Endothelial cell of umbilical vein (primary cell): ENCODE measurements at regions of chr9 and their contacts with region 1.

Region 1: GRCh38 chr9:92140074-92140753 is 25.0 kb upstream of the SPTLC1 start:
- DNase-seq: peak; percentile 72
- H3K4me3 ChIP-seq: no peak overlapping the region
- H3K27ac ChIP-seq: no peak overlapping the region
- H3K4me1 ChIP-seq: peaks cover 5% of the 10 kb centered on the region
- H3K27me3 ChIP-seq: no peaks in the 10 kb centered on the region
- CTCF ChIP-seq: peak; percentile 90 to 99
- POLR2A ChIP-seq: no peak

Region 2: DNA sequence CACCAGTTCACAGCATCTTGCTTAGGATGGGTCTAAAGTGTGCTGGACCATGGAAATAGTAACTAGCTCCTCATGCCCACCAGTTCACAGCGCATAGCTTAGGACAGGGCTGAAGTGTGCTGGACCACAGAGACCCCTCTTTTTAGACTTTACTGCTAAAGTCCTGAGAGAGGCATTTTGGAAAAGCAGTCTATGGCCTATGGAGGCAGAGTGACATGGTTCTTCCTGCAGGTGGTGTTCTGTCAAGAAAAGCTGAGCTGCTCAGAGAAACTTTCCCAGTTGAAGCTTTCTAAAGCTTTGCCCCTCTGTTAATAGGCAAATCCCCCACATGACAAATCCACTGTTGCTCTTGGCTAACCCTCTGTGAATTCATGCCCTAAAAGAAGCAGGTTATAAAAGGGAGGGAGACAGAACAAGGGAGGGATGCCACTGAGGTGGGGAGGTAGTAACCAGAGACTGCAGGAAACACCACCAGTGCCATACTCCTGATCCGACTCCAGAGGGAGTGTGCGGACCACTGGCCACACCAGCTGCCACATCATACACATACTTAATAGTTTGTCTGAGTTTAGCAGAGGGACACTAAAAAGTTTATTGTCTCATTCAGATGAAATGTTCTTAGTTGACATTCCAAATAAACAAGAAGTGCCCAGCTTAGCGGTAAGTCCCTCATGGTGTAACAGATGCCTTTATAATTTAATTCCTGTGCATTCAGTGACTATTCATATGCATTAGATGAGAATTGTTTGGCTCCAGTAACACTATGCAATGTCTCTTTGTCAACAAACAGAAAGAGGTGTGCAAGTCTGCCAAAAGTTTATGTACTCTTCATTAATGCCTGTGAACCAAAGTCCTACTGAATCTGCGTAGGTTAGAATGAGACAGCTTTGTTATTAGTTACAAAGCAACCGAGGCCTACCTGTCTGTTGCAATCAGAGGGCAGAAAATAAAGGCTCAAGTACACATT is 480.4 kb before region 1 on chr9:
- CTCF ChIA-PET with region 1: no interaction called
- POLR2A ChIA-PET with region 1: no interaction called
- dilution Hi-C with region 1: no loop called
- intact Hi-C with region 1: no loop called
- DNase-seq: no peak
- H3K4me3 ChIP-seq: no peak overlapping the region
- H3K27ac ChIP-seq: no peak overlapping the region
- H3K4me1 ChIP-seq: no peaks in the 10 kb centered on the region
- H3K27me3 ChIP-seq: no peaks in the 10 kb centered on the region
- CTCF ChIP-seq: peak; percentile 35 to 37
- POLR2A ChIP-seq: no peak

Region 3: GRCh38 chr9:91775011-91775707 is 365.1 kb before region 1 on chr9:
- CTCF ChIA-PET with region 1: no interaction called
- POLR2A ChIA-PET with region 1: no interaction called
- dilution Hi-C with region 1: no loop called
- intact Hi-C with region 1: no loop called
- DNase-seq: peak; percentile 36
- H3K4me3 ChIP-seq: no peak overlapping the region
- H3K27ac ChIP-seq: no peak overlapping the region
- H3K4me1 ChIP-seq: no peaks in the 10 kb centered on the region
- H3K27me3 ChIP-seq: no peaks in the 10 kb centered on the region
- CTCF ChIP-seq: peak; percentile 68 to 92
- POLR2A ChIP-seq: no peak

Region 4: DNA sequence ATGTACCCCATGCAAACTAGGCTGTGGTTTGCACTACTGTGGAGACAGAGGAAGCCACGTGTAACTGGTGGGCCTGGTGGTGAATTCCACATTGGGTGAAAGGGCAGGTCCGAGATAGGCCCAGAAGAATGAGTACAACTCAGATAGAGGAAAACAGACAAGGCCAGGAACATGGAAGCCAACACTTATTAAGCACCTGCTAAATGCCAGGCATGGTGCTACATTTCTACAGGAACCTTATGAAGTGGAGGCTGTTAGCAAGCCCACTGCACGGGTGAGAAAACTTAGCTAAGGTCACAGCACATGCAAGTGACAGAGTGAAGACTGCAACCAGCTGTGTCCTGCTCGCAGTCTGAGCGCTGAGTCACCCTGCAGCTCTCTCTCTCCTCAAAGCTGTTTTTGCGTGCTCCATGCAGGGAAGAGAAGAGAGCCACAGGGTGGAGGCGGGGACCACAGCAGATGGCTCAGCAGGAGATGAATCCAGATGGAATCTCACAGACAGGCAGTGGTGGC is 40.5 kb after region 1 on chr9:
- CTCF ChIA-PET with region 1: interaction called, 12 read pairs
- POLR2A ChIA-PET with region 1: no interaction called
- dilution Hi-C with region 1: no loop called
- intact Hi-C with region 1: no loop called
- DNase-seq: no peak
- H3K4me3 ChIP-seq: no peak overlapping the region
- H3K27ac ChIP-seq: no peak overlapping the region
- H3K4me1 ChIP-seq: no peaks in the 10 kb centered on the region
- H3K27me3 ChIP-seq: peaks cover 0 to 2% of the 10 kb centered on the region in 2 experiments
- CTCF ChIP-seq: no peak
- POLR2A ChIP-seq: no peak

Region 5: DNA sequence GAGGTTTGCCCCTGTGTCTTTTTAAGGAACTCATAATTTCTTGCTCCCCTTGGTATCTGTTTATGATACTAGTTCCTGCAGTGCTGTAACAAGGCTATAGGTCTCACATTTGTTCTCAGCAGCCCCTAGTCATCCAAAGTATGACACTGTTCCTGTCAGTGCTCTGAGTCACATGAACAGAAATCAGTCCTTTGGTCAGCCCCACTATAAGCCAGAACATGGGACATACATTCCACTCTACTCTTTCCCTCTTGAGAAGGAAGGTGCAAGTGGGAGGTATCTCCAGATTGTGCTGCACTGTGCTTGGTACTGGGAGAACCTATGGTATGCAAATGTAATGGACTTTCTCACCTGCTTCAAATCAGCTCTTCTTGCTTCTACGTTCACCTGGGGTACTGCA is 66.3 kb after region 1 on chr9:
- CTCF ChIA-PET with region 1: interaction called, 67 read pairs
- POLR2A ChIA-PET with region 1: no interaction called
- dilution Hi-C with region 1: no loop called
- intact Hi-C with region 1: loop called (anchors 5 kb)
- DNase-seq: peak; percentile 3
- H3K4me3 ChIP-seq: no peak overlapping the region
- H3K27ac ChIP-seq: no peak overlapping the region
- H3K4me1 ChIP-seq: no peaks in the 10 kb centered on the region
- H3K27me3 ChIP-seq: no peaks in the 10 kb centered on the region
- CTCF ChIP-seq: no peak
- POLR2A ChIP-seq: no peak

Region 6: DNA sequence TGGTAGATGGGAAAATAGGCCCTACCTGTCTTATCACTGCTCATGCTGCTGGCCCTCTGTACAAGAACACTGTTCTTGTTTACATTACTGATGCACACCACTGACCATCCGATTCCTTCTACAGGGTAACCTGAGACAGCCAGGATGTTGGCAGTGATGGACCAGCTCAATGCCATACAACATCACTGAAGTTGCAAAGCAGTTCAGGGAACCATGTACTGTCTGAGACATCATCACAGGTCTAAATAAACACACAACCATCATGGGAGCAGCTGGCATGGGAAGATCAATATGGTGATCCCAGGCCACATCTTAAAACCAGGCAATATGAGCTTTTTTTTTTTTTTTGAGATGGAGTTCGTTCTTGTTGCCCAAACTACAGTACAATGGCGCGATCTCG is 94.3 kb after region 1 on chr9:
- CTCF ChIA-PET with region 1: interaction called, 239 read pairs
- POLR2A ChIA-PET with region 1: no interaction called
- dilution Hi-C with region 1: no loop called
- intact Hi-C with region 1: no loop called
- DNase-seq: no peak
- H3K4me3 ChIP-seq: no peak overlapping the region
- H3K27ac ChIP-seq: no peak overlapping the region
- H3K4me1 ChIP-seq: no peaks in the 10 kb centered on the region
- H3K27me3 ChIP-seq: no peaks in the 10 kb centered on the region
- CTCF ChIP-seq: no peak
- POLR2A ChIP-seq: no peak

Region 7: GRCh38 chr9:92293452-92294296 is 153.5 kb after region 1 on chr9 and contains the start of gene IARS1:
- CTCF ChIA-PET with region 1: interaction called, 4 read pairs
- POLR2A ChIA-PET with region 1: no interaction called
- dilution Hi-C with region 1: no loop called
- intact Hi-C with region 1: loop called (anchors 1 kb)
- DNase-seq: peak; percentile 99
- H3K4me3 ChIP-seq: peak within 1 kb of the TSS; percentile 76 to 98 (median 78)
- H3K27ac ChIP-seq: peak within 1 kb of the TSS; percentile 64
- H3K4me1 ChIP-seq: peaks cover 23% of the 10 kb centered on the region
- H3K27me3 ChIP-seq: no peaks in the 10 kb centered on the region
- CTCF ChIP-seq: peak in 1 of 2 donors; percentile 40
- POLR2A ChIP-seq: peak; percentile 97
- total RNA-seq, gene IARS1: 130 and 132 TPM in 2 replicates

Region 8: GRCh38 chr9:92438900-92439526 is 298.8 kb after region 1 on chr9:
- CTCF ChIA-PET with region 1: interaction called, 24 read pairs
- POLR2A ChIA-PET with region 1: no interaction called
- dilution Hi-C with region 1: no loop called
- intact Hi-C with region 1: loop called (anchors 2 kb)
- DNase-seq: peak; percentile 38
- H3K4me3 ChIP-seq: no peak overlapping the region
- H3K27ac ChIP-seq: no peak overlapping the region
- H3K4me1 ChIP-seq: no peaks in the 10 kb centered on the region
- H3K27me3 ChIP-seq: no peaks in the 10 kb centered on the region
- CTCF ChIP-seq: no peak
- POLR2A ChIP-seq: no peak

Region 9: GRCh38 chr9:92790542-92791527 is 650.6 kb after region 1 on chr9:
- CTCF ChIA-PET with region 1: interaction called, 3 read pairs
- POLR2A ChIA-PET with region 1: no interaction called
- dilution Hi-C with region 1: no loop called
- intact Hi-C with region 1: loop called (anchors 5 kb)
- DNase-seq: peak; percentile 84
- H3K4me3 ChIP-seq: no peak overlapping the region
- H3K27ac ChIP-seq: no peak overlapping the region
- H3K4me1 ChIP-seq: no peaks in the 10 kb centered on the region
- H3K27me3 ChIP-seq: peaks cover 4 to 8% of the 10 kb centered on the region in 2 experiments
- CTCF ChIP-seq: peak; percentile 68 to 73
- POLR2A ChIP-seq: no peak